ENCODE measurements at regions of chr12 and their contacts with region 1.

Region 1: GRCh38 chr12:30440826-30441602 is 254.7 kb downstream of the IPO8 start:
- DNase-seq: no peak
- H3K4me3 ChIP-seq: no peak overlapping the region
- H3K27ac ChIP-seq: no peak overlapping the region
- H3K4me1 ChIP-seq: no peaks in the 10 kb centered on the region
- H3K27me3 ChIP-seq: no peaks in the 10 kb centered on the region
- CTCF ChIP-seq: peak; percentile 64 to 71

Region 2: DNA sequence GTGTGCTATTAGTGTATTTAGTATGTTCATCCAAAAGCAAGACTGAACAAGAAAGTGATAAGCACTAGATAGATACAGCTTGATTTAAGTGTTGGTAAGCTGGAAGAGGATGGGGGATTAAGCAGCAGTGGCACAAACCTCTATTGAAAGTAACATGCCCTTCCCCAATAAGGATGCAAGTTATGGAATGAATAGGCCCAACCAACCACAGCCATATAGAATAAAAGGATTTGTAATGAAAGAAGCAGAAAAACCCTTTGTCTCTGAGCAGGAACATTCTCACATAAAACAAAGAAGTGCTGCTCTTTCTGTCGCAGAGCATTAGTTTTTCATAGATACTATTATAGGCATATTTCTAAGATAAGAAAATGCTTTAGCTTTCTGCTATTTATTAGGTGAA is 56.0 kb before region 1 on chr12:
- CTCF ChIA-PET with region 1: no interaction called
- dilution Hi-C with region 1: no loop called
- in situ Hi-C with region 1: no loop called
- intact Hi-C with region 1: loop called (anchors 10 kb)
- DNase-seq: no peak
- H3K4me3 ChIP-seq: no peak overlapping the region
- H3K27ac ChIP-seq: no peak overlapping the region
- H3K4me1 ChIP-seq: no peaks in the 10 kb centered on the region
- H3K27me3 ChIP-seq: no peaks in the 10 kb centered on the region
- CTCF ChIP-seq: no peak

Region 3: DNA sequence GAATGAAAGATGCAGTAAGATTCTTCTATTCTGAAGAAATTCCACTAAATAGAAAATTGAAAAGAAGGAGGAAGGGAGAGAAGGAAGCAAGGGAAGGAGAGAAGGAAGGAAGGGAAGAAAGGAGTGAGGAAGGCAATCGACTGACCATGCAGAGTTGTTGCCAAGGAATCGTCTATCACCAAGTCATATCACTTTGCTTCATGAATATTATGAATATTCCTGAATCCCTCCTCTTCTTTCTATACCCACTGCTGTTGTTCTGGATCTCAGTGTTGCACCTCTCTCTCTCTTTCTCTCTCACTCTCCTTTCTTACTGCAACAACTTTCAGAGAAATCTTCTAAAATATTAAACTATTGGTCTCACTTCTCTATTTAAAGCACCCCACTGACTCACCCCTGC is 32.3 kb after region 1 on chr12:
- CTCF ChIA-PET with region 1: no interaction called
- dilution Hi-C with region 1: no loop called
- in situ Hi-C with region 1: no loop called
- intact Hi-C with region 1: no loop called
- DNase-seq: no peak
- H3K4me3 ChIP-seq: no peak overlapping the region
- H3K27ac ChIP-seq: no peak overlapping the region
- H3K4me1 ChIP-seq: no peaks in the 10 kb centered on the region
- H3K27me3 ChIP-seq: no peaks in the 10 kb centered on the region
- CTCF ChIP-seq: no peak

Measured in mammary epithelial cell (primary cell).